HepG2 (cell line): ENCODE measurements at regions of chr12 and their contacts with region 1.

Region 1: GRCh38 chr12:110088936-110089335 is 35.2 kb upstream of the IFT81 start:
- DNase-seq: no peak
- ATAC-seq: no peak
- H3K4me3 ChIP-seq: no peak overlapping the region
- H3K27ac ChIP-seq: no peak overlapping the region
- H3K4me1 ChIP-seq: peaks cover 75% of the 10 kb centered on the region
- H3K27me3 ChIP-seq: no peaks in the 10 kb centered on the region
- CTCF ChIP-seq: no peak
- EP300 ChIP-seq: no peak
- POLR2A ChIP-seq: no peak
- RAD21 ChIP-seq: no peak

Region 2: GRCh38 chr12:110039085-110039807 is 49.7 kb before region 1 on chr12:
- CTCF ChIA-PET with region 1: interaction called, 3 read pairs
- POLR2A ChIA-PET with region 1: interaction called, 8 read pairs
- in situ Hi-C with region 1: no loop called
- intact Hi-C with region 1: loop called (anchors 2 kb)
- DNase-seq: peak; percentile 99
- ATAC-seq: peak; percentile 88
- H3K4me3 ChIP-seq: peak overlapping the region in 1 of 3 experiments; percentile 34; a peak in 1 of 6 replicates
- H3K27ac ChIP-seq: peak overlapping the region; percentile 96
- H3K4me1 ChIP-seq: peaks cover 95% of the 10 kb centered on the region
- H3K27me3 ChIP-seq: no peaks in the 10 kb centered on the region
- CTCF ChIP-seq: no peak
- EP300 ChIP-seq: peak; percentile 79 to 80; a peak in 2 of 4 replicates
- POLR2A ChIP-seq: peak in 1 of 2 experiments; percentile 44; a peak in 2 of 4 replicates
- RAD21 ChIP-seq: no peak